Naive thymus-derived CD4-positive, alpha-beta T cell (primary cell): ENCODE measurements at regions of chr1 and their contacts with region 1.

Region 1: DNA sequence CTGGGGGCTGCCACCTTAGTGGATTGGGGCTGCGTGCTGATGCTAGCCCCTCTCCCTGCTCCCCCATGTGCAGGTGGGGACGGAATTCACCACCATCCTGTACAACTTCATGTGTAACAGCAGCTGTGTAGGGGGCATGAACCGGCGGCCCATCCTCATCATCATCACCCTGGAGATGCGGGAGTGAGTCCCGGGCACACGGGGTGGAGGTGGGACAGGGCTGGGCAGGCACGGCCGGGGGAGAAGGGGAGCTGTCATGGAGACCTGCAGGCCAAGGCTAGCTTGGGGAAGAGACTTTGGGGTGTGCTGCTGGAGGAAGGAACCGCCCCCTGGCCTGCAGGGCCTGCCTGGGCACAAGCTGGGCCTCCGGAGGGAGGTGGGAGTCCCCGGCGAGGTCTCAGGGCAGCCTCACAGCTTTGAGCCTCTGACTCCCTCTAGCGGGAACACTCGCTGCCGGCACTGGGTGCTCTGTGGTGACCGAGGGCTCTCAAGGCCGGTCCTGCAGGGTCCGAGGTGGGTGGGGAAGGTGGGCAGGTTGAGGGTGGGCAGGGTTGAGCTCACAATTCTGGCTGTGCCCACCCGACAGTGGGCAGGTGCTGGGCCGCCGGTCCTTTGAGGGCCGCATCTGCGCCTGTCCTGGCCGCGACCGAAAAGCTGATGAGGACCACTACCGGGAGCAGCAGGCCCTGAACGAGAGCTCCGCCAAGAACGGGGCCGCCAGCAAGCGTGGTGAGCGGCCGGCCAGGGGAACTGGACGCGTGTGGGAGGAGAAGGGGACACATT is 25.0 kb upstream of the CCDC27 start:
- DNase-seq: no peak
- ATAC-seq: peak; percentile 14
- H3K4me3 ChIP-seq: no peak overlapping the region
- H3K4me3 Mint-ChIP-seq: no peak overlapping the region
- H3K27ac ChIP-seq: no peak overlapping the region
- H3K27ac Mint-ChIP-seq: no peak overlapping the region
- H3K4me1 ChIP-seq: no peaks in the 10 kb centered on the region
- H3K4me1 Mint-ChIP-seq: peaks cover 0 to 4% (median 0%) of the 10 kb centered on the region in 7 donors
- H3K27me3 ChIP-seq: no peaks in the 10 kb centered on the region
- H3K27me3 Mint-ChIP-seq: peaks cover 0 to 18% (median 0%) of the 10 kb centered on the region in 5 donors

Region 2: DNA sequence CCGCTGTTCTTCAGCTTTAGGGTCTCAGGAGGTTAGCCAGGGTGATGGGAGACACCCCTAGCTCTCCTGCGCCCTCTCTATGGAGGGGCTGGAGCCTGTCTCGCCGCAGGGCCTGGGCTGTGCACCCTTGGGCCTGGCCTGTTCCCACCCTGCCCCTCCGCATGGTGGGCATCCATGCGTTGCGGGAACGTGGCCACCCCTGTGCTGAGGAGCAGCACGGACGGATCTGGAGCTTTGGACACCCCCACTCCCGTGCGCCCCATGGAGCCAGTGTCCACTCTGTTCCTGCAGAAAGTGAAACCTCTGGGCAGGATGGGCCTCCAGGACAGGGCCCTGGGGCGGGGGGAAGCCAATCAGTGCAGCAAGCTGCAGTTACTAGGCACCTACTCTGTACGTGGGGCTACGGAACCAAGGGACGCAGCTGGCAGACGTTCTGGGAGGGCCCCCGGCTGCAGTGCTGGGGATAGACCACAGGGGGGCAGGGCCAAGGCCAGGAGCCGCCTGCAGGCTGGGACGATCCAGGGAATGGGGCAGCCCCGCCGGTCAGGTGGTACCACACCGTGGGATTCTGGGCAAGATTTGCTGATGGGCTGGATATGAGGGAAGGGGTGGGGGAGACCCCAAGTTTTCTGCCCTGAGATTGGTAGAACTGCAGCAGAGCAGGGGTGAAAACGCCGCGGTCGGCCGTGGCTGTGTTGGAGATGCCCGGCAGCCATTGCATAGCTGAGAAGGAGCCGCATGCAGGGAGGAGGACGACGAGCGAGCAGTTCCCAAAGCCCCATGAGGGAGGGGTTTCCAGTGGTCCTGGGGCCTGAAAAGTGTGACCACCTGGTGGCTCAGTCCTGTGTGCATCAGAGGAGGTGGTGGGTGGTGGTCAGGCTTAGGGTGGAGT is 31.7 kb before region 1 on chr1:
- CTCF ChIA-PET with region 1: interaction called, 6 read pairs
- POLR2A ChIA-PET with region 1: no interaction called
- intact Hi-C with region 1: loop called in 1 of 2 experiments (anchors 1 kb)
- DNase-seq: peak in 6 of 9 donors; percentile 20 to 37 (median 30)
- ATAC-seq: peak; percentile 73
- H3K4me3 ChIP-seq: no peak overlapping the region
- H3K4me3 Mint-ChIP-seq: peak overlapping the region in 7 of 10 donors; percentile 34 to 67 (median 54)
- H3K27ac ChIP-seq: no peak overlapping the region
- H3K27ac Mint-ChIP-seq: no peak overlapping the region
- H3K4me1 ChIP-seq: no peaks in the 10 kb centered on the region
- H3K4me1 Mint-ChIP-seq: peaks cover 0 to 11% (median 0%) of the 10 kb centered on the region in 7 donors
- H3K27me3 ChIP-seq: no peaks in the 10 kb centered on the region
- H3K27me3 Mint-ChIP-seq: peaks cover 0 to 19% (median 4%) of the 10 kb centered on the region in 5 donors

Region 3: DNA sequence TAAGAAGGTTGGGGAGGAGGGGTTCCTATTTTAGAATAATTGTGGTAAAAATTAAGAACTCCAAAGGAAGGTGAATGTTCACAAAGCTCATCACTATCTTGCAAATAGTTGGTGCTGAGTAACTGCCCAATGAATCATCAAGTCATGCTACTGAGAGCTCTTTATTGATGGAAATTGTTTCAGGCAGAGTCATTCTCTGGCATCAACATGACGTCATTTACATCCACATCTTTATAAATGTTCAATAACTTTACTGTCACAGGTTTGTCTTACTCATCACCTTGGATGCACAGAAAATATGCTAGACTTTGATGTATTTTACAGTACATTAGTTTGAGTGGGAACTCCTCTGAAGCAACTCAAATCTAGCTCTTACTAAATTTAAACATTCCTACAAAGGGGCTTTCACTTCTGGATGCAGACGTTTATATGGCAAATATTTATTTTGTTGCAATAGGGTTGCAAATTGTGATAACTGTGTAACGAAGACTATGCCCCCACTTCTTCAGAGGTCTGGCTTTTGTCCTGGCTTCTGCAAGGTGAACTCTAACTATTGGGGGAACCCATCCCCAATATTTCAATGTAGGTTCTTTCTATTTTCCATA is 653.4 kb after region 1 on chr1:
- CTCF ChIA-PET with region 1: no interaction called
- POLR2A ChIA-PET with region 1: no interaction called
- intact Hi-C with region 1: no loop called
- DNase-seq: no peak
- ATAC-seq: no peak
- H3K4me3 ChIP-seq: no peak overlapping the region
- H3K4me3 Mint-ChIP-seq: no peak overlapping the region
- H3K27ac ChIP-seq: no peak overlapping the region
- H3K27ac Mint-ChIP-seq: no peak overlapping the region
- H3K4me1 ChIP-seq: no peaks in the 10 kb centered on the region
- H3K4me1 Mint-ChIP-seq: peaks cover 0 to 18% (median 0%) of the 10 kb centered on the region in 7 donors
- H3K27me3 ChIP-seq: no peaks in the 10 kb centered on the region
- H3K27me3 Mint-ChIP-seq: peaks cover 0 to 22% (median 5%) of the 10 kb centered on the region in 5 donors